ENCODE measurements at regions of chrX and their contacts with region 1.

Region 1: GRCh38 chrX:68383540-68383939 is 49.8 kb downstream of the OPHN1 start:
- DNase-seq: no peak
- H3K4me3 ChIP-seq: no peak overlapping the region
- CTCF ChIP-seq: no peak

Region 2: GRCh38 chrX:68415316-68415715 is 31.8 kb after region 1 on chrX:
- in situ Hi-C with region 1: loop called (anchors 5 kb)
- DNase-seq: peak; percentile 75
- H3K4me3 ChIP-seq: no peak overlapping the region
- CTCF ChIP-seq: no peak

Region 3: GRCh38 chrX:68440940-68441339 is 57.4 kb after region 1 on chrX:
- in situ Hi-C with region 1: no loop called
- DNase-seq: peak; percentile 68
- H3K4me3 ChIP-seq: no peak overlapping the region
- CTCF ChIP-seq: no peak